ENCODE measurements at regions of chr7 and their contacts with region 1.

Region 1: DNA sequence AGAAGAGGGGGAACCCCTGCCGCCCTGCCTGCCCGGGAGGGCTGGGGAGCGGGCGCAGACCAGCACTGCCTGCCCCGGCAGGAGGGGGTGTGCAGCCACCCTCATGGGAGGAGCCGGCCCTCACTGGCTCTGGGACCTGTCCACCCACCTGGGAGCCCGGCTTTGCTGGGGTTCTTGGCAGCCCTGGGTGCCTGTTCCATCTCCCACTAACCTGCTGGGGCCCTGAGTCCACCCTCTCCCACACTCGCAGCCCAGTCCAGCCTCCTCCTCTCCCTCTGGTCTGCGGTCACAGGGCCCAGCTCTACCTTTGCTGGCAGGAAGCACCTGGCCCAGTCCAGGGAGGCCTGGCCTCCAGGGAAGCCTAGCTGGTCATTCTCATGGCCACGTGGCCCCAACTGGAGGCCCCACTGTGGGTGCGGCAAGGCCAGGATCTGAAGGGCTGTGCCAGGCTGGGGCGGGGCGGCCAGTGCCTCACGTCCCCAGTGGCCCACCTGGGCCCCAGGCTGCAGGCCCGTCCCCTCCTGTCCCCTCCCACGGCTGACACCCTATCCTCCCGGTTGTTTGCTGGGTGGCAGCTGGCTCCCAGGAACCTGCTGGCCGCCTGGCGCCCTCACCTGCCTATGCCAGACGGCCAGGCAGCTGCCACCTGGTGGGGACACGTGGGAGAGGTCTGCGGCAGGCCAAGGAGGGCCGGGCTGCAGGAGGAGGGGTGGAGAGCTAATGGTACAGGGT is at the start of gene TMEM184A:
- DNase-seq: peak in 6 of 9 experiments; percentile 49 to 68 (median 59)
- ATAC-seq: peak; percentile 87
- H3K4me3 ChIP-seq: no peak within 1 kb of the TSS
- H3K4me3 Mint-ChIP-seq: no peak within 1 kb of the TSS
- H3K27ac ChIP-seq: no peak within 1 kb of the TSS
- H3K27ac Mint-ChIP-seq: no peak within 1 kb of the TSS
- H3K4me1 ChIP-seq: peaks cover 6% of the 10 kb centered on the region
- H3K4me1 Mint-ChIP-seq: peaks cover 3% of the 10 kb centered on the region
- H3K27me3 ChIP-seq: no peaks in the 10 kb centered on the region
- H3K27me3 Mint-ChIP-seq: no peaks in the 10 kb centered on the region
- CTCF ChIP-seq: peak; percentile 44
- total RNA-seq, gene TMEM184A: not detected

Region 2: GRCh38 chr7:1494447-1494846 is 61.5 kb before region 1 on chr7:
- CTCF ChIA-PET with region 1: no interaction called
- POLR2A ChIA-PET with region 1: no interaction called
- intact Hi-C with region 1: no loop called
- DNase-seq: no peak
- ATAC-seq: no peak
- H3K4me3 ChIP-seq: no peak overlapping the region
- H3K4me3 Mint-ChIP-seq: no peak overlapping the region
- H3K27ac ChIP-seq: no peak overlapping the region
- H3K27ac Mint-ChIP-seq: no peak overlapping the region
- H3K4me1 ChIP-seq: no peaks in the 10 kb centered on the region
- H3K4me1 Mint-ChIP-seq: no peaks in the 10 kb centered on the region
- H3K27me3 ChIP-seq: no peaks in the 10 kb centered on the region
- H3K27me3 Mint-ChIP-seq: no peaks in the 10 kb centered on the region
- CTCF ChIP-seq: no peak

Region 3: DNA sequence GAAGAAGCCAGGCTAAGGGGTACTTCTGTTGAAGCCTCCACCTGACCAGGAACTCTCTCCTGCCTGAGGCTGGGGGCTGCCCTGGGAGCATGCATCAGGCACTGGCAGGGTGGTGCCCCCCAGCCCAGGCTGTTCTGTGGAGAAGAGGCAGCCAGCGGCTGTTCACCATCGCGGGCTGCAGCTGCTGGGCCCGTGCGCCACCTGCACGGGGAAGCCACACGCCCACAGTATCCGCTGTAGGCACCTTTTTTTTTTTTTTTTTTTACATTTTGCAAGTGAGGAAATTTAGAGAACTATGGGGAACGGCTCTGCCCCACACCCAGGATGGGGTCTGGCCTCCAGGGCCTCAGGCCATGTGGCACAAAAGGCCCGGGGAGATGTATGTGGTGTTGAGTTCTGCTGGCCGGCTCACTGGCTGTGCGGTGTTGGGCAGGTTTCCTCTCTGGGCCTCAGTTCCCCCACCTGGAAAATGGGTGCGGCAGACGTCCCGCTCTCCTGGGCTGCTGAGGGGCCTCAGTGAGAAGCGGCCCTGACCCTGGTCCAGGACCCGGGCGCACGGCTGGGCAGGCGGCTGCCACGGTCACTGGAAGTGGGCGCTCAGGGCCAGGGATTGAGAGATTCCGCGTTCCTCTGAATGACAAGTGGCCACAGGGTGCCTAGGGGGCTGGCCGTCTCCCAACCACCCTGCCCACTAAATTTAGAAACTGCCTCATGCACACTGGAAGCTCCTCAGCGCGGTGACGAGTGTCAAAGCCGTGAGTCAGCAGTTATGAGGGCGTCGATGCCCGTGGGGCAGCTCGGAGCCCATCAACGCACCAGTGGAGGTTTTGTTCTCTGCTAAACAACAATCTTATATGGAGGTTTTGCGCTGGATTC is 43.0 kb before region 1 on chr7:
- CTCF ChIA-PET with region 1: interaction called, 3 read pairs
- POLR2A ChIA-PET with region 1: no interaction called
- intact Hi-C with region 1: loop called in 1 of 2 experiments (anchors 1 kb)
- DNase-seq: peak in 8 of 9 experiments; percentile 38 to 76 (median 58)
- ATAC-seq: peak; percentile 91
- H3K4me3 ChIP-seq: no peak overlapping the region
- H3K4me3 Mint-ChIP-seq: peak overlapping the region; percentile 35
- H3K27ac ChIP-seq: no peak overlapping the region
- H3K27ac Mint-ChIP-seq: peak overlapping the region; percentile 69
- H3K4me1 ChIP-seq: peaks cover 43% of the 10 kb centered on the region
- H3K4me1 Mint-ChIP-seq: peaks cover 36% of the 10 kb centered on the region
- H3K27me3 ChIP-seq: no peaks in the 10 kb centered on the region
- H3K27me3 Mint-ChIP-seq: no peaks in the 10 kb centered on the region
- CTCF ChIP-seq: no peak

Measured in CD8-positive, alpha-beta T cell (primary cell).